Gastrocnemius medialis (tissue), 4 donors: ENCODE measurements at regions of chr13 and their contacts with region 1.

Region 1: GRCh38 chr13:110841846-110842245 is 73.0 kb downstream of the ANKRD10 start:
- DNase-seq: no peak
- ATAC-seq: no peak
- H3K4me3 ChIP-seq: no peak overlapping the region
- H3K27ac ChIP-seq: no peak overlapping the region
- H3K4me1 ChIP-seq: no peaks in the 10 kb centered on the region
- H3K27me3 ChIP-seq: no peaks in the 10 kb centered on the region
- CTCF ChIP-seq: no peak
- POLR2A ChIP-seq: no peak

Region 2: GRCh38 chr13:109989155-109989554 is 852.7 kb before region 1 on chr13:
- in situ Hi-C with region 1: no loop called
- intact Hi-C with region 1: loop called (anchors 10 kb)
- DNase-seq: no peak
- ATAC-seq: no peak
- H3K4me3 ChIP-seq: no peak overlapping the region
- H3K27ac ChIP-seq: no peak overlapping the region
- H3K4me1 ChIP-seq: no peaks in the 10 kb centered on the region
- H3K27me3 ChIP-seq: no peaks in the 10 kb centered on the region
- CTCF ChIP-seq: no peak
- POLR2A ChIP-seq: no peak

Region 3: GRCh38 chr13:110874508-110874960 is 32.7 kb after region 1 on chr13:
- in situ Hi-C with region 1: no loop called
- intact Hi-C with region 1: no loop called
- DNase-seq: peak; percentile 67 to 76
- ATAC-seq: peak in 1 of 2 donors; percentile 13
- H3K4me3 ChIP-seq: peak overlapping the region; percentile 43 to 56 (median 48)
- H3K27ac ChIP-seq: peak overlapping the region; percentile 58 to 71 (median 66)
- H3K4me1 ChIP-seq: peaks cover 26 to 28% of the 10 kb centered on the region in 2 donors
- H3K27me3 ChIP-seq: no peaks in the 10 kb centered on the region
- CTCF ChIP-seq: no peak
- POLR2A ChIP-seq: no peak